WTC11 (cell line): ENCODE measurements at regions of chr12 and their contacts with region 1.

Region 1: DNA sequence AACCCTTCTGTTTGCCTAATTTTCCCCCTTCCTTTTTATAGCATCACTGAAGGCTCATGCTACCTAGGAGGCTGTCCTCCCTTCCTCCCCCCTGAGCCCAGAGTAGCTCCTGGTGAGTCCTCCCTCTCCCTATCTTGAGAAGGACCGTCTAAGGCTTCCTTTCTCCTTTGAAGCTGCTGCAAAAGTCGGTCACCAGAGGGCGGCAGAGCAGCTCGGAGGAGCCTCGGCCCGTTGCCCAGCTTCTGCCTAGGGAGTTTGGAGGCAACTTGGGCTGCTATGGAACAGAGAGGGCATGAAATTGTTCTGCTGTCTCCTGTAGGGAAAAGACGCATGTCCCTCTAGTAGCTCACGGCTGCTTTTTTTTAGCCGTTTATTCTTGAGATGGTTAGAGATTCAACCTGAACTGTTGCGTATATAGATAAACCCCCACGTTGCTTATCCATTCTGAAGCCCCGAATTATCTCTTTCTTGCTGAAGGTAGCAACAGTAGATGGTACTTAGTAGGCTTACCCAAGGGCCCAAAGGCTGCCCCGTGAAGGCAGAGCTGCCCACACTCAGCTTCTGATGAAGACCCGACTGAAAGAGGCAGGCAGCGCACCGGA is 5.7 kb downstream of the WNT5B start:
- DNase-seq: peak; percentile 83
- ATAC-seq: peak; percentile 74
- H3K4me3 Mint-ChIP-seq: no peak overlapping the region
- H3K27ac Mint-ChIP-seq: no peak overlapping the region
- H3K4me1 Mint-ChIP-seq: peaks cover 34% of the 10 kb centered on the region
- H3K27me3 Mint-ChIP-seq: peaks cover 48% of the 10 kb centered on the region
- CTCF ChIP-seq: peak; percentile 41; the same call in 1 of the 2 replicates

Region 2: GRCh38 chr12:1339618-1340319 is 294.9 kb before region 1 on chr12:
- CTCF ChIA-PET with region 1: no interaction called
- POLR2A ChIA-PET with region 1: no interaction called
- DNase-seq: no peak
- ATAC-seq: no peak
- H3K4me3 Mint-ChIP-seq: no peak overlapping the region
- H3K27ac Mint-ChIP-seq: no peak overlapping the region
- H3K4me1 Mint-ChIP-seq: no peaks in the 10 kb centered on the region
- H3K27me3 Mint-ChIP-seq: 0 out of 2 replicates have a peak, but pooled peaks cover 6% of the 10 kb centered on the region
- CTCF ChIP-seq: no peak

Region 3: GRCh38 chr12:1553987-1554982 is 80.4 kb before region 1 on chr12:
- CTCF ChIA-PET with region 1: no interaction called
- POLR2A ChIA-PET with region 1: no interaction called
- DNase-seq: no peak
- ATAC-seq: no peak
- H3K4me3 Mint-ChIP-seq: no peak overlapping the region
- H3K27ac Mint-ChIP-seq: no peak overlapping the region
- H3K4me1 Mint-ChIP-seq: 0 out of 2 replicates have a peak, but pooled peaks cover under 1% of the 10 kb centered on the region
- H3K27me3 Mint-ChIP-seq: peaks cover 7% of the 10 kb centered on the region
- CTCF ChIP-seq: no peak

Region 4: DNA sequence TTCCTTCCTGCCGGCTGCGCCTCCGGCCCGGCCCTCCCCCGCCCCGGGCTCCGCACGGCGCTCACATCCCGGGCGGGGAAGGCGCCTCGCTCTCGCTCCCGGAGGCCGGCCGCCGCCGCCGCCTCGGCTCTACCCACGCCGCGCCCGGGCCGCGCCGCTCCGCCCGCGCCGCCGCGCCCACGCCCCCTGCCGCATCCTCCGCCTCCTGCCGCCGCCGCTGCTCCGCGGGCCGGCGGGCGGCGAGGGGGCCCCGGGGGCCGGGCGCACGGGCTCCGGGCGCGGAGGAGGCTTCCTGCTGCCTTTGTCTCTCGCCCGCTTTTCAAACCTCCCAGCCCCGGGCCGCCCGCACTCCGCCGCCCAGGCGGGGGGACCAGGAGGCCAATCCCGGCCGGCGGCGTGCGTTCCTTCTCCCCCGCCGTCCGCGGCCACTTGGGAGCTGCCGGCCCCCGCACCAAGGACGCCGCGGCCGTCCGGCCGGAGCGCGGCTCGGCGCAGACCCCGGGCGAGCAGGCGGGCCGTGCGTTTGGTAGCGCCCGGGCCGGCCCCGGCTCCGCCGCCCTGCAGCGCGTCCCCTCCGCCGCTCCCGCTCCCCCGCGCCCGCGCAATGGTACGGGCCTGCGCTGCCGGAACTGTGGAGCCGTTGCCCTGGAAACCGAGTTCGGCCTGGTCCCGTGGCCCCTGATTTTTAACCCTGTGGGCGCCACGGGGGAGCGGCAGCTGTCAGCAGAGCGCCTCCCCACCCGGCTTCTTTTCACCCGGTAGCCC is 40.2 kb before region 1 on chr12 and contains the start of gene FBXL14:
- CTCF ChIA-PET with region 1: interaction called, 16 read pairs
- POLR2A ChIA-PET with region 1: interaction called, 4 read pairs
- DNase-seq: peak; percentile 91
- ATAC-seq: peak; percentile 58
- H3K4me3 Mint-ChIP-seq: peak within 1 kb of the TSS; percentile 86
- H3K27ac Mint-ChIP-seq: no peak within 1 kb of the TSS
- H3K4me1 Mint-ChIP-seq: peaks cover 49% of the 10 kb centered on the region
- H3K27me3 Mint-ChIP-seq: peaks cover 55% of the 10 kb centered on the region
- CTCF ChIP-seq: no peak
- total RNA-seq, gene FBXL14: 12.0 to 14.6 TPM (median 12.9 TPM) in 3 replicates

Region 5: DNA sequence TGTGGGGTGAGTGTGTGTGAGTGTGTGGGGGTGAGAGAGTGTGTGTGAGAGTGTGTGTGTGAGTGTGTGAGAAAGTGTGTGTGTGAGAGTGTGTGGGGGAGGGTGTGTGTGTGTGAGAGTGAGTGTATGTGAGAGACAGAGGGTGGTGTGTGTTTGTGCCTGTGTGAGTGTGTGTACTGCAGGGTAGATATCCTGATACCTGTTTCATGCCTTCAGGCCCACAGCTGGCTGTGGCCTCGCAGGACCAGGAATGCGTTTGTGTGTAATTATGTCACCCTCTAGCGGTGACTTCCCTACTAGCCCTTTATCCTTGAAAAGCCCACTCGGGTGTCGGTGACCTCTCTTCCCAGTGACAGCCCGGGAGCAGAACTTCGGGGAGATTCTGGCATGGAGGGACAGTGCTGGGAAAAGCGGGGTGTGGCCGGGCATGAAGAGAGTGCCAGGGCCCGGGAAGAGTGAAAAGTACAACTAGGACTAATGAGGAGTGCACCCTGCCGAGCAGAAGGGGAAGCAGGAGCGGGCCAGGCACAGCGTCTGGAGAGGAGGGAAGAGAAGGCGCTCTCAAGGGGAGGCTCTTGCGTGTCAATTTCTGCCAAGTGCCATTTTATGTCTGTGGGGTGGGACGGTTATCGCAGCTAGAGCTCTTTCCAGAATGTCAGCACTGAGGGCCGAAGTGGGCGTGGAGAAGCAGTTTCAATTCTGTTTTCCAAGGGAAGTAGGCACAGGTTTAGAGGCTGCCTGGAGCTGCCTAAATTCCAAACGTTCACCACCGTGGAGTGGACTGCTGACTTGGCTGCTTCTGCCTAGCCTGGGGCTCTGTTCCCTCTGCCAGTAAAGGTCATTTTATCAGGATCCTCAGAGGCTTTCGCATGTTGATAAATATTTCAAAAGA is 29.3 kb before region 1 on chr12:
- CTCF ChIA-PET with region 1: interaction called, 18 read pairs
- POLR2A ChIA-PET with region 1: interaction called, 4 read pairs
- DNase-seq: peak; percentile 48
- ATAC-seq: peak; percentile 77
- H3K4me3 Mint-ChIP-seq: peak overlapping the region; percentile 75
- H3K27ac Mint-ChIP-seq: no peak overlapping the region
- H3K4me1 Mint-ChIP-seq: peaks cover 14% of the 10 kb centered on the region
- H3K27me3 Mint-ChIP-seq: peaks cover 38% of the 10 kb centered on the region
- CTCF ChIP-seq: peak; percentile 41; the same call in 1 of the 2 replicates

Region 6: DNA sequence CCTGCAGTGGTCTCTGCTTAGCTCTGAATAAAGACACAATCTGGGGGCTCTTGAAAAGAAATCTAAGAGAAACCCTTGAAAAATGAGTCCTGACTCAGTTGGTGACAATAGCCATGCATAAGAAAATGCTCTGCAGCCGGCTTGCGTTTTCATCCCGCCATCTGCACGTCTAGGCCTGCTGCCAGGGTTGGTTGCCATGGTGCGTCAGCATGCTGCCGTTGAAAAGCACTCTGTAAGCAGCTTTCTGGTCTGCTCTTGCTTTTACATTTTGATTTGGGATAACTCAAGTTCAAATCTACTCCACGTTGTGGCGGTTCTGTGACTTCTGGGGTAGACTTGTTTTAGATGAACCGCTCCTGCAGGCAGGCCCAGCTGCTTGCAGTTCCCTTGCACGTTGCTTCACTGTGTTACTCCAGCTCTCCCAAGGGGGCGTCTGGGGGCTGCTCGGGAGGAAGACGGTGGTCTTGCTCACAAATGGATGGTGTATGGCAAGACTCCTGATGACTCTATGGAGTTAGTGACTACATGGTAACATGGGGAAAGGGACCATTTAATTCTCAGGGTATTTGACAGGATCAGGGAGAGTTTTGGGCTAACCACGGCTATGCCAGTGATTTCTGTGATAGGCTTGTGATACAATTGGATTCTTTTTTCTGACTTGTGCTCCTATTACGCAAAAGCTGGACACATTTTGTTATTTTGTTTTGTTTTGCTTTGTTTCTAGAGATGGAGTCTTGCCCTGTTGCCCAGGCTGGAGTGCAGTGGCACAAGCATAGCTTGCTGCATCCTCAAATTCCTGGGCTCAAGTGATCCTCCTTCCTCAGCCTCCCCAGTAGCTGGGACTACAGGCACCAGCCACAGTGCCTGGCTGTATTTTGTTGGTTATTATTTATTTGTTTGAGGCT is 10.1 kb after region 1 on chr12:
- CTCF ChIA-PET with region 1: interaction called, 18 read pairs
- POLR2A ChIA-PET with region 1: interaction called, 4 read pairs
- DNase-seq: no peak
- ATAC-seq: peak; percentile 30; the same call in 1 of the 2 replicates
- H3K4me3 Mint-ChIP-seq: no peak overlapping the region
- H3K27ac Mint-ChIP-seq: no peak overlapping the region
- H3K4me1 Mint-ChIP-seq: 0 out of 2 replicates have a peak, but pooled peaks cover under 1% of the 10 kb centered on the region
- H3K27me3 Mint-ChIP-seq: no peaks in the 10 kb centered on the region
- CTCF ChIP-seq: no peak

Region 7: DNA sequence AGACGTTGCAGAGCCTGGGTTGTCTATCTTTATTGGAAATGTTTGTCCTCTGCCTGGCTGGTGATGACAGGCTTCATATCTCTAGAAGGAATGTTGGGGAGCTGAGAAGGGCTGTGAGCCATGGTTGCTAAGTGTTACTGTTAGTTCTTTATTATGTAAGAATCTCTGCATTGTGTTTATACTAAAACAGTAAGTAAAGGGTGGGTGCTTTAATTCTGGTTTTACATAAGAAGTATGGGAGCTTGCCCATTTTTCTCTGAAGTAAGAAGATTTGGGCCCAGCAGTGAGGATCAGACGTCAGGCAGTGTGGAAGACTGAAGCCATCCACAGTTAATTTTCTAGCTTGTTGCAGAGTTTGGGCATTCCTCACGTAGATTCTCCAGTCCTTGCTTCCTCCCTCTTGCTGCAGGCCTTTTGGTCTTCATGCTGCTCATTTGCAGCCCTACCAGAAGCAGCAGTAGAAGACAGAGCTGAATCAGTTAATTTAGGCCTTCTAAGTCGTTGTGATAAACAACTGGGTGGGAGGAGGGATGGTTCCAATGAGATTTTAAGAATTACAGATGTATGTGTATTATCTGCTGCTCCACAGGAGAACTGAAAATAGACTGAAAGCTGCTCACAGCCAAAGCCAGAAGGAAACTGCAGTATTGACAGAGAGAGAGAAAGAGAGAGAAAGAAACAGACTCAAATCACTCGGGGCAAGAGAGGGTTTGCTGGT is 15.7 kb after region 1 on chr12:
- CTCF ChIA-PET with region 1: interaction called, 27 read pairs
- POLR2A ChIA-PET with region 1: interaction called, 3 read pairs
- DNase-seq: no peak
- ATAC-seq: no peak
- H3K4me3 Mint-ChIP-seq: no peak overlapping the region
- H3K27ac Mint-ChIP-seq: no peak overlapping the region
- H3K4me1 Mint-ChIP-seq: peaks cover 12% of the 10 kb centered on the region
- H3K27me3 Mint-ChIP-seq: no peaks in the 10 kb centered on the region
- CTCF ChIP-seq: no peak

Region 8: GRCh38 chr12:1661553-1662335 is 27.1 kb after region 1 on chr12:
- CTCF ChIA-PET with region 1: interaction called, 13 read pairs
- POLR2A ChIA-PET with region 1: no interaction called
- DNase-seq: peak; percentile 71
- ATAC-seq: peak; percentile 35
- H3K4me3 Mint-ChIP-seq: peak overlapping the region; percentile 73
- H3K27ac Mint-ChIP-seq: no peak overlapping the region
- H3K4me1 Mint-ChIP-seq: peaks cover 15% of the 10 kb centered on the region
- H3K27me3 Mint-ChIP-seq: peaks cover 49% of the 10 kb centered on the region
- CTCF ChIP-seq: no peak